ENCODE measurements at regions of chr3 and their contacts with region 1.

Region 1: GRCh38 chr3:196502775-196503195 is 783 bp downstream of the RNF168 start:
- DNase-seq: peak; percentile 92
- H3K4me3 ChIP-seq: peak overlapping the region; percentile 61 to 84 (median 67)
- H3K27ac ChIP-seq: peak overlapping the region; percentile 85
- H3K4me1 ChIP-seq: peaks cover 13% of the 10 kb centered on the region
- H3K27me3 ChIP-seq: no peaks in the 10 kb centered on the region
- CTCF ChIP-seq: no peak
- POLR2A ChIP-seq: no peak

Region 2: DNA sequence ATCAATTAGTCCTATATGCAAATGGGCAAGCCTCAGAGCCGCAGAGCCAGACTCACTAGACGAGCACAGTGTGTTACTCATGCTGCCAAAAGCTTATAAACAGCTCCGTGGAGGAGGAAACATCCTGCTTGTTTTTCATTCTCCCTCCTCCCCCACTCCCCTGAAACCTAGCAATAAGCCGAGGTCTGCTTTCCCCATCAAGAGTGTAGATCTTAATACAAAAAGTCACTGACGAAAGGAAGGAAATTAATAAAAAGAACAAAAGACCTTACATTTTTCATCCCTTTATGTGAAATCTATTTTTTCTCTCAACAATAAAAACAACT is 1320.4 kb before region 1 on chr3:
- CTCF ChIA-PET with region 1: no interaction called
- POLR2A ChIA-PET with region 1: interaction called, 12 read pairs
- dilution Hi-C with region 1: no loop called
- intact Hi-C with region 1: no loop called
- DNase-seq: peak; percentile 96
- H3K4me3 ChIP-seq: no peak overlapping the region
- H3K27ac ChIP-seq: peak overlapping the region; percentile 93
- H3K4me1 ChIP-seq: peaks cover 65% of the 10 kb centered on the region
- H3K27me3 ChIP-seq: no peaks in the 10 kb centered on the region
- CTCF ChIP-seq: no peak
- POLR2A ChIP-seq: no peak

Region 3: GRCh38 chr3:196251918-196252317 is 250.9 kb before region 1 on chr3:
- CTCF ChIA-PET with region 1: no interaction called
- POLR2A ChIA-PET with region 1: no interaction called
- dilution Hi-C with region 1: no loop called
- intact Hi-C with region 1: loop called (anchors 5 kb)
- DNase-seq: no peak
- H3K4me3 ChIP-seq: no peak overlapping the region
- H3K27ac ChIP-seq: no peak overlapping the region
- H3K4me1 ChIP-seq: no peaks in the 10 kb centered on the region
- H3K27me3 ChIP-seq: no peaks in the 10 kb centered on the region
- CTCF ChIP-seq: no peak
- POLR2A ChIP-seq: no peak

Region 4: DNA sequence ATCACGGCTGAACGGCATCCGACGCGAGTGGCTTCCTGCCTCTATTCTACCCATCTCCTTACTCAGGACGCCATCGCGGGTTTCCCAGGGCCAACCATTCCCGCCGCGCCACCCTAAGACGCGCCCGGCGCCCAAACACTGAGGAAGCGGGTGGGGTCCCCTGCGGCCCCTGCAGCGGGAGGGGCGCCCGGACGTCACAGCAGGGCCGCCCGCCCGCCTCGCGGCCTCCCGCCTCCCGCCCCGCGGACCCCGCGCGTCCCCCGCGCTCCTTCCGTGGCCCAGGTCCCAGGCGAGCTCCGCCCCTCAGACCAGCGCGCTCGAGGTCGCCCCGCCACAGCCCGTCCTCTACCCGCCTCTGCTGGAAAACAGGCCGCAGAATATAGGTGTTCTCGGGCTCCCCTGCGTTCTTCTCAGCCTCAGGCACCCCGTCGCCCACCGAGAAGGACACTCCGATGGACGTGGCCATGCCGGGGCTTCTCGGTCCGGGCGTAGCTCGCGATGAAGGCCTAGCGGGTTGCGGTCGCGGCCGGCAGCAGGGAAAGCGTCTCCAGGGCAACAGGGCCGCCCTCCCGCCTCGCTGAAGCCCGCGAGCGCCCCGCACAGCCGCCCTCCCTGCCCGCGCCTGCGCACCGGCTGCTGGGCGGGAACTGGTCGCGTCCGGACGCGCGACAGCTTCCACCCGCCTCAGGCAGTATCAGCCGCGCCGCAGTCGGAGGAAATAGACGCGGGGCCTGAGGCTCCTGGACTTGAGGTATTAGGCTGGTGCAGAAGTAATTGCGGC is 184.9 kb before region 1 on chr3 and contains the start of gene DYNLT2B:
- CTCF ChIA-PET with region 1: no interaction called
- POLR2A ChIA-PET with region 1: no interaction called
- dilution Hi-C with region 1: no loop called
- intact Hi-C with region 1: loop called (anchors 1 kb)
- DNase-seq: peak; percentile 94
- H3K4me3 ChIP-seq: peak within 1 kb of the TSS; percentile 48 to 96 (median 53)
- H3K27ac ChIP-seq: peak within 1 kb of the TSS; percentile 51
- H3K4me1 ChIP-seq: peaks cover 5% of the 10 kb centered on the region
- H3K27me3 ChIP-seq: no peaks in the 10 kb centered on the region
- CTCF ChIP-seq: no peak
- POLR2A ChIP-seq: peak; percentile 96
- total RNA-seq, gene DYNLT2B: 13.9 and 14.4 TPM in 2 replicates

Region 5: DNA sequence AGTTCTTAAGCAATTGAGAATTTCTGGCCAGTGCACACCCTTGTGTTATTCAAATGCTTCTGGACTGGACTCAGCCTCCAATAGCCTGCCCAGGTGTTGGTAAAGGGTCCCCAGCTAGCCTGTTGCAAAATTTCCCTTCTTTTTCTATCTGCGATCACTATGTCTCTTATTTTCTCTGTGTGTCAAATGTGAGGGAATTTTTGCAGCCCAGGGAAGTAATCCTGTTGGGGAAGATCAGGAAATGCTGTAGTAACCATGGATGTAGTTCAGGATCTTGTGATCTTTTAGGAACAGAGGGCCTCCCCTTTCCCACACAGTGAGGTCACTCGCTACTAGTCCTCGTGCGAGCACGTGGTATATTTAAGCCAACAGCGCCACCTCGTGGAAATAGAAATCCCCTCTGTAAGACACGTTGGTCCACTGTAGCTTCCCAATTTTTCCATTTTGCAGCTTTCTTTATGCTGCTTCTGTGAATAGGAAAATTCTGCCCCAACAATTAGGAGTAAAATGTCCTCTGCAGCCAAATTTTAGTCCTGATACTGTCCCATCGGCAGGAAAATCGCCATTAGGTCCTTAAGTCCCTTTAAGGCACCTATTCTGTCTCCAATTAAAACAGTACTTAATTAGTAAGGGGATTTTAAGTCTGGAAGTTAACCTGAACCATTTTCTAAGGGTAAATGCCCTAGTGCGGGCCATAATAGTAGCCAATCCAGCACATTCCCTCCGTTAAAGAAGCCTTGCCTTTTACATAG is 16.4 kb after region 1 on chr3:
- CTCF ChIA-PET with region 1: interaction called, 17 read pairs
- POLR2A ChIA-PET with region 1: no interaction called
- dilution Hi-C with region 1: no loop called
- intact Hi-C with region 1: no loop called
- DNase-seq: peak; percentile 62
- H3K4me3 ChIP-seq: no peak overlapping the region
- H3K27ac ChIP-seq: no peak overlapping the region
- H3K4me1 ChIP-seq: no peaks in the 10 kb centered on the region
- H3K27me3 ChIP-seq: no peaks in the 10 kb centered on the region
- CTCF ChIP-seq: peak; percentile 32 to 44
- POLR2A ChIP-seq: no peak

Region 6: DNA sequence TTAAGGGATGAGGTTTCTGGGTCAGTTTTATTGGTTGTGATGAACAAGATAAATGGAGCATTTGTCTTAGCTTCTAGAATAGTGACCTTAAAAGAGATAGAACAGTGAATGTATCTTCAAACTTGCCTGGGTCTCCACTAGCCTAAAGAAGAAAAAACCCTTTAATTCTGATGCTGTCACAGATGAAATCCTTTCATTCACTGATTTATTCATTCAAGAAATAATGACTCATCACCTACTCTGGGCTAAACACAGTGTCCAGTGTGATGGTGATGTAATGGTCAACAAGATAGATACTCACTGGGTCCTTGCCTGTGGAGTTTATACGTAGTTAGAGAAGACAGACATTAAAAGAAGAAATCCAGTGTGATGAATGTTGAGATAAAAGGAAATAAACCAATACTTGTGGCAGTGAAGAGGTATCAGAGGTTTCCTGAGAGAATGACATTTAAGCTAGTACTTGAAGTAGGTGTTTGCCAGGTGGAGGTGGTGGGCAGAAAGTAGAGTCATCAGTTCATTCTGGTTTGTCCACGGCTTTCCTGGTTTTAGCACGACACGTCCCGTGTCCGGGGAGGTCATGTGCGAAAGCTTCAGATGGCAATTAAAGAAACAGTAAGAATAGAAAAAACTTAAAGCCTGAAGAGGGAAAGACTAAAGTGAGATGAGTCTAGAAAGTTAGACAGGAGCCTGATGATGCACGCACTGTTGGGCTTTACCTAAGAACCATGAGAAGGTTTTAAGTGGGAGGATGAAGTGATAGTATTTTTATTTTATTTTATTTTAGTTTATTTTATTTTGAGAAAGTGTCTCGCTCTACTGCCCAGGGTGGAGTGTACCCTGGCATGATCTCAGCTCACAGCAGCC is 255.3 kb after region 1 on chr3:
- CTCF ChIA-PET with region 1: no interaction called
- POLR2A ChIA-PET with region 1: no interaction called
- dilution Hi-C with region 1: no loop called
- intact Hi-C with region 1: no loop called
- DNase-seq: peak; percentile 54
- H3K4me3 ChIP-seq: no peak overlapping the region
- H3K27ac ChIP-seq: no peak overlapping the region
- H3K4me1 ChIP-seq: peaks cover 6% of the 10 kb centered on the region
- H3K27me3 ChIP-seq: no peaks in the 10 kb centered on the region
- CTCF ChIP-seq: no peak
- POLR2A ChIP-seq: no peak